Activated CD4-positive, alpha-beta T cell treated with anti-CD3 and anti-CD28 coated beads for 36 hours (primary cell): ENCODE measurements at regions of chr16 and their contacts with region 1.

Region 1: DNA sequence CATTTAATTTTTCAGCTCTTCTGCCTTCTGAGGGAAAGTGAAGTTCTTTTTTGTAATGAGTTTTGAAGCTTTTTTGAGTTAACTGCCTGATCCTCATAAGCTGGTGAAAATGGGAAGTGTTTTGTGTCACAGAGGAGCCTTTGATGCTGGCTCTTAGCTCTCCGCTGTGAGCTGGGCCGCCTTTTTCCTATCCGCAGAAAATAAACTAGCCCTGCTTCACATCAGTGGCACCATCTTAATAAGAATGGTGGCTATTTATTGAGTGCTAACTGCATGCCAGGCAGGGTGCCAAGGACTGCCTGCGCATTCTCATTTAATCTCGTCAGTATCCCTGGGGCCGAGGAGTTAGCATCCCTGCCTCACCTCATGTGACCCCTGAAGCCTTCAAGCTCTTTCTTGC is 309.0 kb downstream of the CPPED1 start:
- DNase-seq: no peak
- ATAC-seq: no peak
- H3K4me3 Mint-ChIP-seq: no peak overlapping the region
- H3K27ac Mint-ChIP-seq: no peak overlapping the region
- H3K4me1 Mint-ChIP-seq: peaks cover 7% of the 10 kb centered on the region
- H3K27me3 Mint-ChIP-seq: no peaks in the 10 kb centered on the region

Region 2: DNA sequence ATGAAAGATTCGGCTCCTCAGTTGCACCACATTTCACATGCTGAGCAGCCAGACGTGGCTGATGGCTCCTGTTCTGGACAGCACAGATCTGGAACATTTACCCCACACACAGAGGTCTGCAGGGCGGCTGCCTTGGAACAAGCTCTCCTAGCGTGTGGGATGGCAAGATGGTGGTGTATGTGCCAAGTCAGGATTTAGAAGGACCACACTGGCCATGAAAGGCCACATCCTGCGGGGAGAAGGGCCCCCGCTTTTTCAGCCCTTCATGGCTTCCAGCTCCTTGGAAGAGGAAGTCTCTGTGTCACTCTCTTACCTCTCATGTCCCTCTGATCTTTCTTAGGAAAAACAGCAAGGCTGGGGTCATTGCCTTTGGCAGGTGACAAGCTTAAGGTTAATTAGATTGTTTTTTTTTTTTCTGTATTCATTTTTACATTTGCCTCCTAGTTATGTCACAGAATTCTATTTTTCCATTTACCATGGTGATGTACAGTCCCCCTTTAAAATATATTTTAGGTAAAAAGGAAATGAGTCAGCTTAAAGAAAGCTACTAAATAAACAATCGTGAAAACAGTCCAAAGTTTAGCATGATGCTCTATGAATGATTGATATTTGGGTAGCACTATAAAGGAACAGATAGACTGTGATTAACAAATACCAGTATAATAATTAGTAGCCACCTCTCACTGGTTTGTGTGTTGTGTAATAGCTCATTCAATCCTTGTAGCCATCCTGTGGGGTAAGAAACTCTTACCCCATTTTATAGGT is 87.6 kb before region 1 on chr16:
- CTCF ChIA-PET with region 1: no interaction called
- POLR2A ChIA-PET with region 1: no interaction called
- intact Hi-C with region 1: no loop called
- DNase-seq: no peak
- ATAC-seq: no peak
- H3K4me3 Mint-ChIP-seq: no peak overlapping the region
- H3K27ac Mint-ChIP-seq: no peak overlapping the region
- H3K4me1 Mint-ChIP-seq: no peaks in the 10 kb centered on the region
- H3K27me3 Mint-ChIP-seq: no peaks in the 10 kb centered on the region

Region 3: GRCh38 chr16:12482455-12483220 is 12.0 kb before region 1 on chr16:
- CTCF ChIA-PET with region 1: no interaction called
- POLR2A ChIA-PET with region 1: no interaction called
- intact Hi-C with region 1: loop called in 1 of 2 experiments (anchors 1 kb)
- DNase-seq: no peak
- ATAC-seq: no peak
- H3K4me3 Mint-ChIP-seq: no peak overlapping the region
- H3K27ac Mint-ChIP-seq: no peak overlapping the region
- H3K4me1 Mint-ChIP-seq: no peaks in the 10 kb centered on the region
- H3K27me3 Mint-ChIP-seq: no peaks in the 10 kb centered on the region